CD8-positive, alpha-beta T cell (primary cell): ENCODE measurements at regions of chrX and their contacts with region 1.

Region 1: GRCh38 chrX:68828740-68829552 is at the start of gene EFNB1:
- DNase-seq: peak; percentile 70 to 92 (median 81)
- ATAC-seq: peak; percentile 96
- H3K4me3 ChIP-seq: peak within 1 kb of the TSS; percentile 74
- H3K4me3 Mint-ChIP-seq: peak within 1 kb of the TSS; percentile 89
- H3K27ac ChIP-seq: peak within 1 kb of the TSS; percentile 15 to 31
- H3K27ac Mint-ChIP-seq: peak within 1 kb of the TSS; percentile 76
- H3K4me1 ChIP-seq: peaks cover 6% of the 10 kb centered on the region
- H3K4me1 Mint-ChIP-seq: peaks cover 19% of the 10 kb centered on the region
- H3K27me3 ChIP-seq: peaks cover 0 to 3% of the 10 kb centered on the region in 2 experiments
- H3K27me3 Mint-ChIP-seq: no peaks in the 10 kb centered on the region
- CTCF ChIP-seq: no peak
- total RNA-seq, gene EFNB1: 4.3 to 4.9 TPM

Region 2: DNA sequence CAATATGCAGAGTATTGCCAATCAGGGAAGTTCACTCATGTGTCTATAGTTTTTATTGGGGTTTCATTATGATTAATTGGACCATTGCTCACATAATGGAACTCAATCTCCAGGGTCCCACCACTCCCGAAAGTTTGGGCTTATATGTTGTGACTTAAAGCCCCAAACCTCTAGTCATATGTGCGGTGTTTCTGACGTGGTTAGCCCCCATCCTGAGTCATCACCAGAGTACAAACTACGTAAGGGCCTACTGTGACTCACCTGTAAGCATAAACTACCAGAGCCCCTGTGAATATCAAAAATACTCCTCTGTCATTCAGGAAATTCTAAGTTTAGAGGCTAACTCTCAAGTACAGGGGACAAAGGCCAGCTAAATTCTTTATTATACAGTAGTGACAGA is 324.7 kb before region 1 on chrX:
- CTCF ChIA-PET with region 1: no interaction called
- POLR2A ChIA-PET with region 1: no interaction called
- intact Hi-C with region 1: loop called in 1 of 2 experiments (anchors 2 kb)
- DNase-seq: peak in 5 of 9 experiments; percentile 42 to 59 (median 47)
- ATAC-seq: peak; percentile 81
- H3K4me3 ChIP-seq: no peak overlapping the region
- H3K4me3 Mint-ChIP-seq: no peak overlapping the region
- H3K27ac ChIP-seq: no peak overlapping the region
- H3K27ac Mint-ChIP-seq: peak overlapping the region; percentile 83
- H3K4me1 ChIP-seq: peaks cover 9% of the 10 kb centered on the region
- H3K4me1 Mint-ChIP-seq: peaks cover 73% of the 10 kb centered on the region
- H3K27me3 ChIP-seq: no peaks in the 10 kb centered on the region
- H3K27me3 Mint-ChIP-seq: no peaks in the 10 kb centered on the region
- CTCF ChIP-seq: no peak

Region 3: DNA sequence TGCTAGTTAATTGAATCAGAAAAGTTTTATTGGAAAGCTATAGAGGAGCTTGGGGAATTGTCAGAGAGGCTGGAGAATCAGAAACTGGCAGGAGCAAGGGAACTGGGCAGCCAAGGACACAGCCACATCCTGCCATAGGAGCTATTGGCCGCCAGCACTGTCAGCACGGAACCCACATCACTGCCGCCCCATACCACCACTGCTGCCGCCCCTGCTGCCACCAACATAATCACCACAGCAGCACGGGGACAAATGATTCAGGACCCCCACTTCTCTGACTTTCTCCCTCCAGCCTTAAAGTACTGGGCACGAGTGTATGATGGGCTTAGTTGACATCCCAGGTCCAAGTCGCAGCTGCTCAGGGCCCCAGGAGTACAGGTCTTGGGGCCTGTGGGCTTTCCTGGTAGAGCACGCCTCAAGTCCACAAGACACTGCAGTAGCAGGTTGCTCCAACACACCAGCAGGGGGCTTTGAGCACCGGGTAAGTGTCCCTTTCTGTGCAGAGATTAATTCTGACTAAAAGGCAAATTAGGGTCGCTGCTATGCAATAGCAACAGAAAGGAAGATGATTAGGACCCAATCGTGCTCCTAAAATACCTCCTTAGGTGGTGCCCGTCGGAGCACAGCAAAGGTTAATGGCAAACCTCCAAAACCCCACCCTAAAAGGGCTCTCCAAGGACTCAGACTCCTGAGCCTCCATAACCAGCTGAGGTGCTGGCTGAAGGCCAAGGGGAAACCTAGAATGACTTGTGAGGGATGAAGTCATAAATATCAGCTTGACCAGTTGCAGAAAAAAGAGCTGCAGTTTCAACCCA is 329.4 kb after region 1 on chrX:
- CTCF ChIA-PET with region 1: interaction called, 12 read pairs
- POLR2A ChIA-PET with region 1: no interaction called
- intact Hi-C with region 1: no loop called
- DNase-seq: peak in 7 of 9 experiments; percentile 11 to 57 (median 45)
- ATAC-seq: peak; percentile 64
- H3K4me3 ChIP-seq: no peak overlapping the region
- H3K4me3 Mint-ChIP-seq: no peak overlapping the region
- H3K27ac ChIP-seq: no peak overlapping the region
- H3K27ac Mint-ChIP-seq: no peak overlapping the region
- H3K4me1 ChIP-seq: peaks cover 15% of the 10 kb centered on the region
- H3K4me1 Mint-ChIP-seq: peaks cover 22% of the 10 kb centered on the region
- H3K27me3 ChIP-seq: no peaks in the 10 kb centered on the region
- H3K27me3 Mint-ChIP-seq: no peaks in the 10 kb centered on the region
- CTCF ChIP-seq: peak; percentile 38

Region 4: GRCh38 chrX:69222103-69223090 is 393.5 kb after region 1 on chrX:
- CTCF ChIA-PET with region 1: interaction called, 111 read pairs
- POLR2A ChIA-PET with region 1: interaction called, 3 read pairs
- intact Hi-C with region 1: loop called in 1 of 2 experiments (anchors 1 kb)
- DNase-seq: peak; percentile 45 to 85 (median 76)
- ATAC-seq: peak; percentile 77
- H3K4me3 ChIP-seq: no peak overlapping the region
- H3K4me3 Mint-ChIP-seq: no peak overlapping the region
- H3K27ac ChIP-seq: no peak overlapping the region
- H3K27ac Mint-ChIP-seq: no peak overlapping the region
- H3K4me1 ChIP-seq: no peaks in the 10 kb centered on the region
- H3K4me1 Mint-ChIP-seq: no peaks in the 10 kb centered on the region
- H3K27me3 ChIP-seq: no peaks in the 10 kb centered on the region
- H3K27me3 Mint-ChIP-seq: no peaks in the 10 kb centered on the region
- CTCF ChIP-seq: peak; percentile 57

Region 5: GRCh38 chrX:69387567-69388487 is 558.9 kb after region 1 on chrX:
- CTCF ChIA-PET with region 1: interaction called, 5 read pairs
- POLR2A ChIA-PET with region 1: no interaction called
- intact Hi-C with region 1: loop called in 1 of 2 experiments (anchors 10 kb)
- DNase-seq: peak in 6 of 9 experiments; percentile 0 to 52 (median 30)
- ATAC-seq: no peak
- H3K4me3 ChIP-seq: no peak overlapping the region
- H3K4me3 Mint-ChIP-seq: no peak overlapping the region
- H3K27ac ChIP-seq: no peak overlapping the region
- H3K27ac Mint-ChIP-seq: no peak overlapping the region
- H3K4me1 ChIP-seq: no peaks in the 10 kb centered on the region
- H3K4me1 Mint-ChIP-seq: no peaks in the 10 kb centered on the region
- H3K27me3 ChIP-seq: no peaks in the 10 kb centered on the region
- H3K27me3 Mint-ChIP-seq: peaks cover 6% of the 10 kb centered on the region
- CTCF ChIP-seq: no peak

Region 6: DNA sequence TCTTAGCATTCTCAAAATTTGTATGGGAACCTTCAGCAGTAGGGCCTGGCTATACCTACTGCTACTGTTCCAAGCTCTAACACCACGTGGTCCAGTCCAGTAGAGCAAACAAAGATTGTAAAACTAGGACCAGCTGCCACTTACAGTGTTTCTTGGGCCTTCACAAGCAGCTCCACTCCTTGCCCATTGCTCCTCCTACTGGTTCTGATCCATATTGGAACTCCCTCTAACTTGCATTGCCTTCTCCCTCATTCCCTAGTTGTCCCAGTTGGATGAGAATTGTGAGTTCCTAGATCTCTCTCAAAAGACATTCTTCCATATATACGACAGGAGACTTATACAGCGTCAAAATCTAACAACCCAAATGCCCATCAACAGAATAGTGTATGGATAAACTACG is 1144.4 kb after region 1 on chrX:
- CTCF ChIA-PET with region 1: no interaction called
- POLR2A ChIA-PET with region 1: no interaction called
- intact Hi-C with region 1: no loop called
- DNase-seq: no peak
- ATAC-seq: no peak
- H3K4me3 ChIP-seq: no peak overlapping the region
- H3K4me3 Mint-ChIP-seq: no peak overlapping the region
- H3K27ac ChIP-seq: no peak overlapping the region
- H3K27ac Mint-ChIP-seq: no peak overlapping the region
- H3K4me1 ChIP-seq: no peaks in the 10 kb centered on the region
- H3K4me1 Mint-ChIP-seq: no peaks in the 10 kb centered on the region
- H3K27me3 ChIP-seq: no peaks in the 10 kb centered on the region
- H3K27me3 Mint-ChIP-seq: no peaks in the 10 kb centered on the region
- CTCF ChIP-seq: no peak

Region 7: GRCh38 chrX:70133303-70134115 is 1304.6 kb after region 1 on chrX and contains the start of gene IGBP1:
- CTCF ChIA-PET with region 1: no interaction called
- POLR2A ChIA-PET with region 1: interaction called, 7 read pairs
- intact Hi-C with region 1: loop called in 1 of 2 experiments (anchors 10 kb)
- DNase-seq: peak; percentile 48 to 93 (median 76)
- ATAC-seq: peak; percentile 81
- H3K4me3 ChIP-seq: peak within 1 kb of the TSS; percentile 84 to 88
- H3K4me3 Mint-ChIP-seq: peak within 1 kb of the TSS; percentile 99
- H3K27ac ChIP-seq: peak within 1 kb of the TSS; percentile 95 to 96
- H3K27ac Mint-ChIP-seq: peak within 1 kb of the TSS; percentile 98
- H3K4me1 ChIP-seq: peaks cover 21% of the 10 kb centered on the region
- H3K4me1 Mint-ChIP-seq: peaks cover 45% of the 10 kb centered on the region
- H3K27me3 ChIP-seq: no peaks in the 10 kb centered on the region
- H3K27me3 Mint-ChIP-seq: no peaks in the 10 kb centered on the region
- CTCF ChIP-seq: peak; percentile 48
- total RNA-seq, gene IGBP1: 55.7 to 56.6 TPM